Activated CD4-positive, alpha-beta T cell treated with anti-CD3 and anti-CD28 coated beads, Interleukin-2, amount 10 ng/mL, durations not matched to agents 7 days and 5 days (primary cell): ENCODE measurements at regions of chr16 and their contacts with region 1.

Region 1: GRCh38 chr16:4298761-4299522 is 16.9 kb upstream of the GLIS2 start:
- DNase-seq: no peak
- H3K4me3 Mint-ChIP-seq: no peak overlapping the region
- H3K27ac Mint-ChIP-seq: no peak overlapping the region
- H3K4me1 Mint-ChIP-seq: peaks cover 5% of the 10 kb centered on the region
- H3K27me3 Mint-ChIP-seq: no peaks in the 10 kb centered on the region

Region 2: GRCh38 chr16:4194661-4195060 is 104.3 kb before region 1 on chr16:
- CTCF ChIA-PET with region 1: no interaction called
- POLR2A ChIA-PET with region 1: no interaction called
- DNase-seq: no peak
- H3K4me3 Mint-ChIP-seq: no peak overlapping the region
- H3K27ac Mint-ChIP-seq: no peak overlapping the region
- H3K4me1 Mint-ChIP-seq: no peaks in the 10 kb centered on the region
- H3K27me3 Mint-ChIP-seq: no peaks in the 10 kb centered on the region

Region 3: DNA sequence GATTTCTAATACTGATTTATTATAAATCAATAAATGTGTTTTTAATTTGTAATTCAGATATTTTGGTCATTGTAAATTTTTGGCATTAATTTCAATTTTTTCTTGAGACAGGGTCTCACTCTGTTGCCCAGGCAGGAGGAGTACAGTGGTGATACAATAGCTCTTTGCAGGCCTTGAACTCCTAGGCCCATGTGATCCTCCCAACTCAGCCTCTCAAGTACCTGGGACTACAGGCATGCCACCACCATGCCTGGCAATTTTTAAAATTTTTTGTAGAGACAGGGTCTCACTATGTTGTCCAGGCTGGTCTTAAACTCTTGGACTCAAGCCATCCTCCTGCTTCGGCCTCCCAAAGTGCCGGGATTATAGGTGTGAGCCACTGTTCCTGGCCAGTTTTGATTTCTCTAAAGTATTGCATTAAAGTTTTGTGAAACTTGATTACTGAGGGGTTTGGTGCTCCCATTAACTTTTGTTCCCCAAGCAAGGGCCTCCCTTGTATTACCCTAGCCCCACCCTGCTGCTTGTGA is 20.9 kb before region 1 on chr16:
- CTCF ChIA-PET with region 1: no interaction called
- POLR2A ChIA-PET with region 1: no interaction called
- DNase-seq: no peak
- H3K4me3 Mint-ChIP-seq: no peak overlapping the region
- H3K27ac Mint-ChIP-seq: no peak overlapping the region
- H3K4me1 Mint-ChIP-seq: peaks cover 5% of the 10 kb centered on the region
- H3K27me3 Mint-ChIP-seq: no peaks in the 10 kb centered on the region

Region 4: DNA sequence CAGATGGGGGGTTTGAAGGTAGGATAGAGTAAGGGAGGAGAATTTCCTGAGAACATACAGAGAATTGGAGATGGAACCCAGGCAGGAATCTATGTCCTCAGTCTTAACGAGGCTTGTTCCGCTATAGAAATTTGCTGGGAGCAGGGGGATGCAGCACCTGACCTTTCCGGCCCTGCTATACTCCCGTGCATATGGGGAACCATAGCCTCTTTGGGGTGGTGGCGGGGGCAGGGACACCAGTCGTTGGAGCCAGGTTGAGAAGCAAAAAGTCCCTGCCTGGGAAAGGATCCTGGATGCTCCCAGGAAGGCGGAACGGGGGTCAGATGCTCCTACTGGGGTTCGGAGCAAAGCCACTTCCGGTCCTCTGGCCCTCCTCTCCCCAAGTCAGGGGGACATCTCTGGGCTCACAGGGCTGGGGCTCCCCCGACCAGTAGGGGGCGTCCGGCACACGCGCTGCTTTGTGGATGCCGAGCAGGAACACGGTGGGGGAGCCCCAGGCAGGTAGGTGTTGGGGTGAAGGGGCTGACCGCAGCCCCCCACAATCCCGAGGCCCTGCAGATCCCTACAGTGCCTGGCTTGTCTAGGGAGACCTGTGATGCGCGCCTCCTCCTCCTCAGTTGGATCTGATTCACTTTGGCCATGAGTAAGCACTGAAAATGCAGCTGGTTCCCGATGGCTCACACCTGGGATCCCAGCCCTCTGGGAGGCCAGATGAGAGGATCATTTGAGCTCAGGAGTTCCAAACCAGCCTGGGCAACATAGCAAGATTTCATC is 10.6 kb before region 1 on chr16:
- CTCF ChIA-PET with region 1: interaction called, 11 read pairs
- POLR2A ChIA-PET with region 1: no interaction called
- DNase-seq: peak; percentile 82
- H3K4me3 Mint-ChIP-seq: no peak overlapping the region
- H3K27ac Mint-ChIP-seq: no peak overlapping the region
- H3K4me1 Mint-ChIP-seq: peaks cover 13% of the 10 kb centered on the region
- H3K27me3 Mint-ChIP-seq: no peaks in the 10 kb centered on the region